WTC11 (cell line): ENCODE measurements at regions of chr12 and their contacts with region 1.

Region 1: GRCh38 chr12:127496255-127496654 is 770.7 kb upstream of the TMEM132C start:
- DNase-seq: peak; percentile 13
- ATAC-seq: peak; percentile 86
- H3K4me3 Mint-ChIP-seq: no peak overlapping the region
- H3K27ac Mint-ChIP-seq: no peak overlapping the region
- H3K4me1 Mint-ChIP-seq: peaks cover 16% of the 10 kb centered on the region
- H3K27me3 Mint-ChIP-seq: peaks cover 6% of the 10 kb centered on the region
- CTCF ChIP-seq: no peak

Region 2: GRCh38 chr12:126897778-126898177 is 598.5 kb before region 1 on chr12:
- CTCF ChIA-PET with region 1: no interaction called
- POLR2A ChIA-PET with region 1: interaction called, 11 read pairs
- DNase-seq: no peak
- ATAC-seq: no peak
- H3K4me3 Mint-ChIP-seq: no peak overlapping the region
- H3K27ac Mint-ChIP-seq: no peak overlapping the region
- H3K4me1 Mint-ChIP-seq: peaks cover 5% of the 10 kb centered on the region; the same call in 1 of the 2 replicates
- H3K27me3 Mint-ChIP-seq: peaks cover 3% of the 10 kb centered on the region; the same call in 1 of the 2 replicates
- CTCF ChIP-seq: no peak

Region 3: DNA sequence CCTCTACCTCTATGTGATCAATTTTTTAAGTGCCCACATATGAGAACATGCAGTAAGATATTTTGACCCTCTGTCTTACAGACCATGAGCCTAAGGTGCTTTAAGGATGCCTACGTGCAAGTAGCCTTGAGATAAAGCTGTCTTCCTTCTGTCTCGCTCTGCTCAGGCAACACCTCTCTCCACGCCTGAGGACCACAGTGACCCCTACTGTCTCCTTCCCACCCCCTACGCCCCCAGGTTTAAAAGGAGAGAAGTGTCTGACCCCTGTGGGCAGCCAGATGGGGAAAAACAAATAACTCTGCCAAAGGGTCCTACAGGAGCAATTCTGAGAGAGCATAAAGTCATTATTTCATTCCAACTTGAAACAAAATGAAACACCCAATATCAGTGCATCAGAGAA is 484.3 kb after region 1 on chr12:
- CTCF ChIA-PET with region 1: no interaction called
- POLR2A ChIA-PET with region 1: no interaction called
- DNase-seq: no peak
- ATAC-seq: no peak
- H3K4me3 Mint-ChIP-seq: no peak overlapping the region
- H3K27ac Mint-ChIP-seq: no peak overlapping the region
- H3K4me1 Mint-ChIP-seq: no peaks in the 10 kb centered on the region
- H3K27me3 Mint-ChIP-seq: peaks cover 20% of the 10 kb centered on the region
- CTCF ChIP-seq: no peak